Sigmoid colon (tissue), 7 donors: ENCODE measurements at regions of chr6 and their contacts with region 1.

Region 1: DNA sequence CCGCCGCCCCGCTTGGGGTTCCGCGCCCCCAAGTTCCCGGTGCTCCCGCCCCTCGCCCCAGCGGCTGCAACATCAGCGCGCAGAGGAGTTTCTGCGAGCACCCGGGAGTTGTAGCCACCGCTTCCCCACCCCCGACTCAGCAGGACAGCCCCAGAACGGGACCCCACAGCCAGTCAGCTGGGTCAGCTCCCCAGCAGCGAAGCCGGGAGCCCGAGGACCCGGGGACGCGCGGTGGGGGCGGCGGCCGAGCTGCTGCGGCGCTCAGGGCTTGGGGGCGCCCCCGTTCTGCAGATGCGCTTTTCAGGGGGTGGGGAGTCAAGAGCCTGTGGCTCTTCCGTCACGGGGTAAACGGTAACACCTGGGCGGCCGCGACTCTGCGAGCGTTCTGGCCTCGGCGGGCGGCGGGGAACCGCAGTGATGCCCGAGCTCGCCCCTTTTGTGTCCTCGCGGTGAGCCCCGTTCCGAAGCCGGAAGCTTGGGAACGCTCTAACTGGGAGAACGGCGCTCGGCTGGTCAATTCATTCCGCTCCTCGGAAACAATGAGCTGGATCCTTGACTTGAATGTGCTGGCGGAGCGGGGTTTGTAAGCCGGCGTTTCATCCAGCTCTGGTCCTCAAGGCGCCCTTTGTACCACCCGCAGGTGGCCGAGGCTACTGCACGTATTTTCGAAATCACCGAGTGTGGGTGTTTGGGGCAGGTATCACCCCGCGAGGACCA is 774 bp downstream of the PLEKHG1 start:
- DNase-seq: peak; percentile 84
- H3K4me3 ChIP-seq: peak overlapping the region; percentile 60 to 85 (median 74)
- H3K27ac ChIP-seq: peak overlapping the region; percentile 74 to 81 (median 80)
- H3K4me1 ChIP-seq: peaks cover 0 to 16% (median 3%) of the 10 kb centered on the region in 4 donors
- H3K27me3 ChIP-seq: no peaks in the 10 kb centered on the region
- CTCF ChIP-seq: peak; percentile 38 to 64 (median 54)
- EP300 ChIP-seq: no peak
- POLR2A ChIP-seq: no peak

Region 2: DNA sequence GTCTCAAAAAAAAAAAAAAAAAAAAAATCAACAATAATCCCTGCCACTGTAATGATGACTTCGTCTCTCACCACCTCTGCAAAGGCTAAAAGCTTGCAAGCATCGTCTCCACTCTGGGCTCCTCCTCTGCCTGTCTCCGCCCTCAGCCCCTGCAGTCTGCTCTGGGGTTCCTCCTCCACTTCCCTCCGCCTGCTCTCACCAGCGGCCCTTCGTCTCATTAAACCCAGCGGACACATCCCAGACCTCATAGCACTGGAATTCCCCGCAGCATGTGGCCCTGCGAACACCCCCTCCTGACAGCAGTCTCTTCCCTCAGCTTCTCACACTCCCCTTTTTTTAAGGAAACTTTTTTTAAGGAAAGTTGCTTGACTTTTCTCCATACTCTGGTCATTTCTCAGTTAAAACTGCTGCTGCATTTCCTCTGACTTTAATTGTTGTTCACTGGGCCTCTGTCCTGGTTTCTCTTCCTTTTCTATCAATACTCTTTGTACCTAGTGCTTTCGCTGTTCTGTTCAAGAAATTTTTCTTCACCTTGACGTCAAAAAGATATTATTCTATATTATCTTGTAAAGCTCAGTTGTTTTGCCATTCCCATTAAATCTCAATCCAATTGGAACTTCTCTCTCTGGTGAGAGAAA is 71.7 kb before region 1 on chr6:
- intact Hi-C with region 1: loop called (anchors 5 kb)
- DNase-seq: peak; percentile 91
- H3K4me3 ChIP-seq: no peak overlapping the region
- H3K27ac ChIP-seq: peak overlapping the region in 3 of 4 donors; percentile 62 to 79 (median 77)
- H3K4me1 ChIP-seq: peaks cover 0 to 31% (median 23%) of the 10 kb centered on the region in 4 donors
- H3K27me3 ChIP-seq: no peaks in the 10 kb centered on the region
- CTCF ChIP-seq: no peak
- EP300 ChIP-seq: peak in 2 of 4 donors; percentile 40 to 53
- POLR2A ChIP-seq: no peak

Region 3: GRCh38 chr6:150541576-150541975 is 58.9 kb before region 1 on chr6:
- intact Hi-C with region 1: no loop called
- DNase-seq: no peak
- H3K4me3 ChIP-seq: no peak overlapping the region
- H3K27ac ChIP-seq: no peak overlapping the region
- H3K4me1 ChIP-seq: peaks cover 0 to 28% (median 12%) of the 10 kb centered on the region in 4 donors
- H3K27me3 ChIP-seq: no peaks in the 10 kb centered on the region
- CTCF ChIP-seq: no peak
- EP300 ChIP-seq: no peak
- POLR2A ChIP-seq: no peak

Region 4: GRCh38 chr6:150813319-150813992 is 213.0 kb after region 1 on chr6:
- intact Hi-C with region 1: loop called (anchors 5 kb)
- DNase-seq: no peak
- H3K4me3 ChIP-seq: no peak overlapping the region
- H3K27ac ChIP-seq: peak overlapping the region in 3 of 4 donors; percentile 16 to 52 (median 27)
- H3K4me1 ChIP-seq: peaks cover 0 to 22% (median 8%) of the 10 kb centered on the region in 4 donors
- H3K27me3 ChIP-seq: no peaks in the 10 kb centered on the region
- CTCF ChIP-seq: no peak
- EP300 ChIP-seq: no peak
- POLR2A ChIP-seq: no peak